ENCODE measurements at regions of chr17 and their contacts with region 1.

Region 1: GRCh38 chr17:48047741-48048383 is at the start of gene NFE2L1:
- DNase-seq: peak; percentile 100
- ATAC-seq: peak; percentile 91
- H3K4me3 ChIP-seq: peak within 1 kb of the TSS; percentile 86
- H3K27ac ChIP-seq: peak within 1 kb of the TSS; percentile 98
- H3K4me1 ChIP-seq: peaks cover 24% of the 10 kb centered on the region
- H3K27me3 ChIP-seq: no peaks in the 10 kb centered on the region
- CTCF ChIP-seq: no peak
- POLR2A ChIP-seq: peak; percentile 90
- RAD21 ChIP-seq: no peak
- total RNA-seq, gene NFE2L1: 35.6 and 42.8 TPM in 2 replicates

Region 2: GRCh38 chr17:48037036-48037837 is 10.6 kb before region 1 on chr17 and contains the start of gene COPZ2:
- CTCF ChIA-PET with region 1: no interaction called
- POLR2A ChIA-PET with region 1: no interaction called
- dilution Hi-C with region 1: no loop called
- in situ Hi-C with region 1: no loop called
- intact Hi-C with region 1: loop called (anchors 2 kb)
- DNase-seq: peak; percentile 44
- ATAC-seq: peak; percentile 90
- H3K4me3 ChIP-seq: peak within 1 kb of the TSS; percentile 65
- H3K27ac ChIP-seq: peak within 1 kb of the TSS; percentile 66
- H3K4me1 ChIP-seq: peaks cover 10% of the 10 kb centered on the region
- H3K27me3 ChIP-seq: no peaks in the 10 kb centered on the region
- CTCF ChIP-seq: peak; percentile 58
- POLR2A ChIP-seq: no peak
- RAD21 ChIP-seq: peak; percentile 38
- total RNA-seq, gene COPZ2: 41.0 and 60.5 TPM in 2 replicates